Prostate gland (tissue), 2 donors: ENCODE measurements at regions of chr2 and their contacts with region 1.

Region 1: DNA sequence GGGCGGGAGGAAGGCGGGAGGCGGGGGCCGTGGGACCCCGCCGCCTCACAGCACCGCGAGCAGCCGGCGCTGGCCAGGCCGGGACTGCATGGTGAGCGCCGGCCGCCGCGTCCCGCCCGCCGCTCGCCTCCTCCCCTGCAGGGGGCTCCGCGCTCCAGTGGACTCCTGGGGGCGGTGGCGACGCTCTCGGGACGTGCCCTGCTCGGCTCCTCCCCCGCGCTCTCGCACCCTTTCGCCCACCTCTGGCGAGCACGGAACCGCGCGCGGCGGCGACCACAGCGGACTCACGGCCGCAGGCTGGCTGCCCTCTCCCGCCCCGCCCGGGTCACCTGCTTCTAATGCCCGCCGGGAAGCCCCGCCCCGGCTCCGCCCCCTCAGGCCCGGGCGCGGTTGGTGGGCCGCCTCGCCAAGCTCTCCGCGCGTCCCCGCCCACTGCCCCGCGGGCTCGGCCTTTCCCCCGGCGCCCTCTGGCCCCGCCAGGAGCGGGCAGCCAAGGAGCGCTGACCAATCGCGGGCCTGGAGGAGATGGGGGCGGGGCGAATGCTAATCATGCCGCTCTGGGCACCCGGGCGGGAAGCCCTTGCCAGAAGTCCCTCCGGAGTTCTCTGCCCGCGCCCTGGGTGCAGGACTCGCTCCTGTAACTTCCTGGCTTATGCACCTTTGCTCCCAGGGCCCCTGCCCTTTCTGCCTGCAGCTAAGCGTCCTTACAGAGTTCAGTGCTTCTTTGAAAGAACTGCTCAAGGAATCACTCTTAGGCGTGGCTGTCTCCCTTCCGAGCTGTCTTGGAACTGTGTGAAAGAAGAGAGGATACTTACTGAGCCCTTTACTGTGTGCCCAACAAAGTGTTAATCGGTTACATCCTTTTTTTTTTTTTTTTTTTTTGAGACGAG is at the start of gene FZD5:
- DNase-seq: peak; percentile 91
- H3K4me3 ChIP-seq: peak within 1 kb of the TSS; percentile 74
- H3K27ac ChIP-seq: peak within 1 kb of the TSS; percentile 82 to 90
- H3K4me1 ChIP-seq: peaks cover 9% of the 10 kb centered on the region
- H3K27me3 ChIP-seq: no peaks in the 10 kb centered on the region
- CTCF ChIP-seq: peak in 3 of 4 experiments; percentile 46 to 62 (median 61)
- POLR2A ChIP-seq: peak; percentile 89
- total RNA-seq, gene FZD5: 9.1 to 32.7 TPM

Region 2: GRCh38 chr2:207625018-207625907 is 144.6 kb before region 1 on chr2 and contains the start of gene METTL21A:
- intact Hi-C with region 1: no loop called
- DNase-seq: peak; percentile 83
- H3K4me3 ChIP-seq: peak within 1 kb of the TSS; percentile 84 to 92
- H3K27ac ChIP-seq: peak within 1 kb of the TSS; percentile 95 to 96
- H3K4me1 ChIP-seq: no peaks in the 10 kb centered on the region
- H3K27me3 ChIP-seq: no peaks in the 10 kb centered on the region
- CTCF ChIP-seq: peak; percentile 7 to 64 (median 31)
- POLR2A ChIP-seq: peak; percentile 84
- total RNA-seq, gene METTL21A: 5.2 to 15.5 TPM

Region 3: DNA sequence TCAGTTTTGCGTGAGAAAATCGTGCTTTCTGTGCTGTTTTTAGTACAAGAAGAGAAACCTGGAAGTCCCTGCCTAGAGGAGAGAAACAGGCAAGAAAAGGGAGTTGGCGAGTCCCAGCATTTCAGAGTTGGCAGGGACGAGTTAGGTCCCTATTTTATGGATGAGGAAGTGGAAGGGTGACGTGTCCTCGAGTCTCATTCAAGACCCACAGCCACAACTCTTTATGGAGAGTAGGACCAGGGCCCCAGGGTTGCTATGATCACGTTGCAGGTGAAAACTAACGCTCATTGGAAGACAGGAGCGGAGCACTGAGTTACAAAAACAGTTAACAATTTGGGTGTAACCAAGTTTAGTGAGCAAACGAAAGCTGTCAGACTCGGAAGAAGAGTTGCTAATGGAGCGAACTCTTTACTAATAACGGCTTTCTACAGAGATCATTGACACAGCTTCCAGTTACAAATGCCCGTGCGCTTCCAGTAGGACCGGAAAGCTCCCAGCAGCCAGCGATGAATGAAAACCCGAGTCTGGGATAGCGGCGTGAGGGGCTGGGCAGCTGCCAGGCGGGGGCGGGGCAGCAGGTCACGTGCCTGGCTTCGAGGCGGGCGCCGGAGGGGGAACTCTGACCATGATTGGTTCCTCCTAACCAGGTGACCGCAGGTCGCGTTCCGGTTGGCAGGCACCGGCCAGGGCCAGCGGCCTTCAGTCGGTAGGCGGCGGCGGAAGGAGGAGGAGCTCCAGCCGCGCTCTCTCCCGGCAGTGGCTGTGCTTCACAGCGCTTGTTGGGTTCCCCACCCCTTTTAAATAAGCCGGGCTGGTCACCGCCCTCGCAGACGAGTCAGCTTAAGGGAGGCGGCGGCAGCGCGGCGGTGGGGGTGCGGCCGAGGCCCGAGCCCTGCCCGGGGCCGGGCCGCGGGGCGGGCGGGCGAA is 58.8 kb before region 1 on chr2 and contains the start of gene CCNYL1:
- intact Hi-C with region 1: no loop called
- DNase-seq: peak; percentile 99
- H3K4me3 ChIP-seq: peak within 1 kb of the TSS; percentile 84 to 95
- H3K27ac ChIP-seq: peak within 1 kb of the TSS; percentile 84 to 87
- H3K4me1 ChIP-seq: no peaks in the 10 kb centered on the region
- H3K27me3 ChIP-seq: no peaks in the 10 kb centered on the region
- CTCF ChIP-seq: peak in 3 of 4 experiments; percentile 37 to 94 (median 72)
- POLR2A ChIP-seq: peak; percentile 95
- total RNA-seq, gene CCNYL1: 5.7 to 9.7 TPM

Region 4: GRCh38 chr2:207974216-207974605 is 204.4 kb after region 1 on chr2:
- intact Hi-C with region 1: loop called (anchors 2 kb)
- DNase-seq: no peak
- H3K4me3 ChIP-seq: no peak overlapping the region
- H3K27ac ChIP-seq: no peak overlapping the region
- H3K4me1 ChIP-seq: peaks cover 4% of the 10 kb centered on the region
- H3K27me3 ChIP-seq: no peaks in the 10 kb centered on the region
- CTCF ChIP-seq: no peak
- POLR2A ChIP-seq: no peak

Region 5: GRCh38 chr2:208025037-208025813 is 255.4 kb after region 1 on chr2 and contains the start of gene PLEKHM3:
- intact Hi-C with region 1: loop called (anchors 2 kb)
- DNase-seq: peak; percentile 78
- H3K4me3 ChIP-seq: peak within 1 kb of the TSS; percentile 54 to 62
- H3K27ac ChIP-seq: peak within 1 kb of the TSS; percentile 60 to 73
- H3K4me1 ChIP-seq: no peaks in the 10 kb centered on the region
- H3K27me3 ChIP-seq: no peaks in the 10 kb centered on the region
- CTCF ChIP-seq: no peak
- POLR2A ChIP-seq: peak; percentile 36
- total RNA-seq, gene PLEKHM3: 17.0 to 28.6 TPM

Region 6: GRCh38 chr2:208072250-208072892 is 302.5 kb after region 1 on chr2:
- intact Hi-C with region 1: no loop called
- DNase-seq: peak; percentile 63
- H3K4me3 ChIP-seq: no peak overlapping the region
- H3K27ac ChIP-seq: no peak overlapping the region
- H3K4me1 ChIP-seq: no peaks in the 10 kb centered on the region
- H3K27me3 ChIP-seq: no peaks in the 10 kb centered on the region
- CTCF ChIP-seq: peak; percentile 43 to 69 (median 62)
- POLR2A ChIP-seq: no peak